ENCODE measurements at regions of chr13 and their contacts with region 1.

Region 1: DNA sequence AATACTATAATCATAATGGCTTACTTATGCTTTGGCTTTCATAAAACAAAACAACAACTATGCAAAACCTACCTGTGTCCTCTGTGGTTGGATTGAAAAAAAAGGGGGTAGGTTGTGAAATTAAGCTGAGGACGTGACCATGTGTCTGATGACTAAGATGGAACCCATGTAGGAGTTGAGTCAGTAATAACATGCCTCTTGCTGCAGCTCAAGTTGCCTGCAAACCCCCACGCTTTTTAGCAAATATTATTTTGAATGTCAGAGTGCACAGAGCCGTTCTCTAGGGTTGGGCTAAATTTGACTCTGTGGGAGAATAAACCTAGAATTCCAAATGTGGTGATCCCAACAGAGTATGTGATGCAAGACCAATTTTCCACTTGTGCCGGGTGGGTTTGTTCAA is 209.3 kb downstream of the KCNRG start:
- DNase-seq: peak; percentile 55
- CTCF ChIP-seq: no peak

Region 2: DNA sequence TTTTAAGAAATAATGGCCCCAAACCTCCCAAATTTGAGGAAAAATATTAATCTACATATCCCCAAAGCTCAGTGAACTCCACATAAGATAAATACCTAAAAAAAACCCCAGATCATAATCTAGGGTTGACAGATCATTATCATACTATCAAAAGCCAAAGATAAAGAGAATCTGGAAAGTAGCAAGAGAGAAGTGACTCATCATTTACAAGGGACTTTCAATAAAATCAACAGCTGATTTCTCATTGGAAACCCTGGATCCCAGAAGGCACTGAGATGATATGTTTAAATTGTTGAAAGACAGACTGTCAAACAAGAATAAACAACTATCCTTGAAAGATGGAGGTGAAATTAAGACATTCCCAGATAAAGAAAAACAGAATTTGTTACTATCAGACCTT is 10.0 kb before region 1 on chr13:
- CTCF ChIA-PET with region 1: no interaction called
- POLR2A ChIA-PET with region 1: no interaction called
- DNase-seq: no peak
- CTCF ChIP-seq: no peak

Region 3: DNA sequence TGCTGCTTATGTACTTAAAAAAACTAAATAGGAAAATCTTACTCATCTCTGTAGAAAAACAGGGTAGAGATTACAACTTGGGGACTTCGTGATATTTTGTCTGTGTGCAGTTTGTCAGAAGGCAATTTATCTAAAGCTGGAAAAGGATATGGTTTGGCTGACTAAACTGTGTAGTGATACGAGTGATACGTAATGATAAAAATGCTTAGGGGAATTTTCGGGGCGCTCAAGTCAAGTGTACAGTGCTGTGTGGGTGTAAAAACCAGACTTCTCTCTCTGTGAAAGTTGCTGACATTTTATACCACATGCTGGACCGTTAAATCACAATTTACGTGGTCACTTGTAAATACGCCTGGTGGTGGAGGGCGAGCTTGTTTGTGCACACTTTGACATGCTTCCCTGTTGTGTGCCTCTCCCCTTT is 12.4 kb after region 1 on chr13:
- CTCF ChIA-PET with region 1: interaction called, 12 read pairs
- POLR2A ChIA-PET with region 1: no interaction called
- DNase-seq: peak; percentile 60
- CTCF ChIP-seq: no peak

Measured in GM10248 (cell line).